Endothelial cell of umbilical vein (primary cell): ENCODE measurements at regions of chr1 and their contacts with region 1.

Region 1: DNA sequence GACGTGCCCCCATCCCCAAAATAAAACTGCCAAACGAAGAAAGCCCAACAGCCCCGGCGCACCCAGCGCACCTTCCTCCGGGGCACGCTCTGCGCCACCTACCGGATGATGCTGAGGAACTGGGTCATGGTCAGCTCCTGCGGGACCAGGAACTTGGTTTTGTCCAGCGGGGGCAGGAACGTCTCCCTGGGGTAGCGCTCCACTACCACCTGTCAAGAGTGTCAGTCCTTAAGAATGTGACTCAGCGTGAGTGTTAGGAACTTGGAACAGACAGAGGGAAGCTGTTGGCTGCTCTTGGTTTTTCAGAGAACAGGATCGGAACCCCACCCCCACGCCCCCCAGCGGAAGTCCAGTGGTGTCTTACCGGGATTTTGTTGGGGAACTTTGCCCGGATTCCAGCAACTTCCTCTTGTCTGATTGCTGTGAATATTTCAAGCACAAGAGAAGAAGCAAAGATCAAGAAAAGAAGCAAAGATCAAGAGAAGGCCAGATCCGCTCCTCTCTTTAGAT is 431 bp downstream of the MAP1LC3C start:
- DNase-seq: peak; percentile 48
- H3K4me3 ChIP-seq: peak overlapping the region in 2 of 3 experiments; percentile 22 to 53
- H3K27ac ChIP-seq: no peak overlapping the region
- H3K4me1 ChIP-seq: peaks cover 4% of the 10 kb centered on the region
- H3K27me3 ChIP-seq: no peaks in the 10 kb centered on the region
- CTCF ChIP-seq: peak; percentile 58 to 81
- POLR2A ChIP-seq: no peak

Region 2: GRCh38 chr1:241847796-241848685 is 150.4 kb before region 1 on chr1 and contains the start of gene EXO1:
- CTCF ChIA-PET with region 1: interaction called, 7 read pairs
- POLR2A ChIA-PET with region 1: no interaction called
- dilution Hi-C with region 1: no loop called
- intact Hi-C with region 1: loop called (anchors 1 kb)
- DNase-seq: peak; percentile 94
- H3K4me3 ChIP-seq: peak within 1 kb of the TSS; percentile 33 to 69 (median 61)
- H3K27ac ChIP-seq: peak within 1 kb of the TSS; percentile 85
- H3K4me1 ChIP-seq: peaks cover 12% of the 10 kb centered on the region
- H3K27me3 ChIP-seq: peaks cover 3 to 7% of the 10 kb centered on the region in 2 experiments
- CTCF ChIP-seq: peak; percentile 32 to 37
- POLR2A ChIP-seq: peak; percentile 58
- total RNA-seq, gene EXO1: 19.8 and 23.5 TPM in 2 replicates

Region 3: GRCh38 chr1:241985787-241986186 is 12.7 kb before region 1 on chr1:
- CTCF ChIA-PET with region 1: interaction called, 12 read pairs
- POLR2A ChIA-PET with region 1: no interaction called
- dilution Hi-C with region 1: no loop called
- intact Hi-C with region 1: no loop called
- DNase-seq: peak; percentile 31
- H3K4me3 ChIP-seq: no peak overlapping the region
- H3K27ac ChIP-seq: no peak overlapping the region
- H3K4me1 ChIP-seq: no peaks in the 10 kb centered on the region
- H3K27me3 ChIP-seq: no peaks in the 10 kb centered on the region
- CTCF ChIP-seq: peak; percentile 25 to 37
- POLR2A ChIP-seq: no peak

Region 4: GRCh38 chr1:242033447-242033846 is 35.0 kb after region 1 on chr1:
- CTCF ChIA-PET with region 1: no interaction called
- POLR2A ChIA-PET with region 1: no interaction called
- dilution Hi-C with region 1: no loop called
- intact Hi-C with region 1: no loop called
- DNase-seq: no peak
- H3K4me3 ChIP-seq: no peak overlapping the region
- H3K27ac ChIP-seq: no peak overlapping the region
- H3K4me1 ChIP-seq: no peaks in the 10 kb centered on the region
- H3K27me3 ChIP-seq: no peaks in the 10 kb centered on the region
- CTCF ChIP-seq: no peak
- POLR2A ChIP-seq: no peak

Region 5: DNA sequence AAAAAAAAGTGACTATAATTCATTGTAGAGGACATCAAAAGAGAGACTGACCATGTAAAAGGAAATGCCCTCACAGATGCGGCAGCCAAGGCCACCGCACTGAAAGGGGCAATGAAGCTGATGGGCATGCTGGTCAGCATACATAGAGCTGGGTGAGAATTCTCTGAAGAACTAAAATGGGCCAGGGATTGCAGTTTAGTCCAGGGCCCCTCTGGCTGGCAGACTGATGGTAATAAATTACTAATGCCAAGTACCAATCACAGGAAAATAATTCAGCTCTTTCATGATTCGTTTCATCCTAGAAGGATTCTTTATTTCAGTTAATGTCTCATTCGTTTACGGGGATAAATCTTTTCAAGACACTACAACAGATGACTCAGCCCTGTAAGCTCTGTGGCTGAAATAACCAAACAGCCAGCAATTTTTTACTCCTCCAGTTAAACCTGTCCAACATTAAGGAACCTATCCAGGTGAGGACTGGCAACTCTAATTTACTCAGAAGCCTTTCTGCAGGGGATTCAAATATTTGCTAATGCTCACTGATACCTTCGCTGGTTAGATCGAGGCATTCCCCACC is 57.4 kb after region 1 on chr1:
- CTCF ChIA-PET with region 1: no interaction called
- POLR2A ChIA-PET with region 1: no interaction called
- dilution Hi-C with region 1: no loop called
- intact Hi-C with region 1: no loop called
- DNase-seq: no peak
- H3K4me3 ChIP-seq: no peak overlapping the region
- H3K27ac ChIP-seq: no peak overlapping the region
- H3K4me1 ChIP-seq: no peaks in the 10 kb centered on the region
- H3K27me3 ChIP-seq: no peaks in the 10 kb centered on the region
- CTCF ChIP-seq: no peak
- POLR2A ChIP-seq: no peak

Region 6: GRCh38 chr1:242081446-242081845 is 83.0 kb after region 1 on chr1:
- CTCF ChIA-PET with region 1: no interaction called
- POLR2A ChIA-PET with region 1: no interaction called
- dilution Hi-C with region 1: no loop called
- intact Hi-C with region 1: no loop called
- DNase-seq: no peak
- H3K4me3 ChIP-seq: no peak overlapping the region
- H3K27ac ChIP-seq: no peak overlapping the region
- H3K4me1 ChIP-seq: no peaks in the 10 kb centered on the region
- H3K27me3 ChIP-seq: no peaks in the 10 kb centered on the region
- CTCF ChIP-seq: no peak
- POLR2A ChIP-seq: no peak